Spleen (tissue), 13 donors: ENCODE measurements at regions of chr12 and their contacts with region 1.

Region 1: DNA sequence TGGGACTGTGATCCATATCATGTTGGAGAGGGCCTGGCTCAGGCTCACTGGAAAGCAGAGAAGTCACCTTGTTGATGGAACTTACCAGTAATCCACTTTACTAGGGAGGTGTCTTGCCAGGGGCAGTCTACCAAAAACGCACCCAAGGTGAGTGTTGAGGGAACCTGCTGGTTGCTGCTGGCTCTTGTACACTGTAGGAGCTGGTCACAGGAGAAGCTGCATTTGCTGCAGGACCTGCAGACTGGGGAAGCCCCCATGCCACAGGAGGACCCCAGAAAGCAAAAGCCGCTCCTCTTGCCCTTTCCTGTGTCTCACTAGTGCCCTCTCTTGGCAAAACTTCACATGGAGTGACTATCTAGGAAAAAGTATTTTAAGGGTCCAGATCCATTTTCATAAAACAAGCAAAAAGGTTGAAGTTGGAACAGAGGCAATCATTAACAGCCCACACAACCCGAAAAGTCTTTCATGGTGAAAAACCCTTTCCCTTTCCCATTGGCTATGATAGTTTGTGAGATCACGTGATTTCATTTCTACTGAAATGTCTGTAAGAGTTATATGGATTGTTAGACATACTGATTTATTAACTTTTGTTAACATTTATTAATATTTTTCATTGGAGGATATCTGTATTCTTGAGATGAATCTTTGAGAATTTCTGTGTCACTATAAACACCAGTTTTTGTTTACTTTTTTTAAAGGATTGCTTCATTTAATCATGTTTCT is 59.2 kb downstream of the RASSF8 start:
- DNase-seq: no peak
- H3K4me3 ChIP-seq: no peak overlapping the region
- H3K27ac ChIP-seq: no peak overlapping the region
- H3K4me1 ChIP-seq: peaks cover 0 to 6% (median 0%) of the 10 kb centered on the region in 6 donors
- H3K27me3 ChIP-seq: peaks cover 0 to 5% (median 0%) of the 10 kb centered on the region in 7 donors
- CTCF ChIP-seq: peak in 7 of 11 experiments; percentile 24 to 48 (median 27)
- POLR2A ChIP-seq: no peak

Region 2: GRCh38 chr12:25591144-25591543 is 426.5 kb before region 1 on chr12:
- intact Hi-C with region 1: loop called (anchors 10 kb)
- DNase-seq: no peak
- H3K4me3 ChIP-seq: no peak overlapping the region
- H3K27ac ChIP-seq: no peak overlapping the region
- H3K4me1 ChIP-seq: no peaks in the 10 kb centered on the region
- H3K27me3 ChIP-seq: peaks cover 0 to 4% (median 0%) of the 10 kb centered on the region in 7 donors
- CTCF ChIP-seq: no peak
- POLR2A ChIP-seq: no peak